Right ventricle myocardium inferior (tissue), 1 donor: ENCODE measurements at regions of chr7 and their contacts with region 1.

Region 1: DNA sequence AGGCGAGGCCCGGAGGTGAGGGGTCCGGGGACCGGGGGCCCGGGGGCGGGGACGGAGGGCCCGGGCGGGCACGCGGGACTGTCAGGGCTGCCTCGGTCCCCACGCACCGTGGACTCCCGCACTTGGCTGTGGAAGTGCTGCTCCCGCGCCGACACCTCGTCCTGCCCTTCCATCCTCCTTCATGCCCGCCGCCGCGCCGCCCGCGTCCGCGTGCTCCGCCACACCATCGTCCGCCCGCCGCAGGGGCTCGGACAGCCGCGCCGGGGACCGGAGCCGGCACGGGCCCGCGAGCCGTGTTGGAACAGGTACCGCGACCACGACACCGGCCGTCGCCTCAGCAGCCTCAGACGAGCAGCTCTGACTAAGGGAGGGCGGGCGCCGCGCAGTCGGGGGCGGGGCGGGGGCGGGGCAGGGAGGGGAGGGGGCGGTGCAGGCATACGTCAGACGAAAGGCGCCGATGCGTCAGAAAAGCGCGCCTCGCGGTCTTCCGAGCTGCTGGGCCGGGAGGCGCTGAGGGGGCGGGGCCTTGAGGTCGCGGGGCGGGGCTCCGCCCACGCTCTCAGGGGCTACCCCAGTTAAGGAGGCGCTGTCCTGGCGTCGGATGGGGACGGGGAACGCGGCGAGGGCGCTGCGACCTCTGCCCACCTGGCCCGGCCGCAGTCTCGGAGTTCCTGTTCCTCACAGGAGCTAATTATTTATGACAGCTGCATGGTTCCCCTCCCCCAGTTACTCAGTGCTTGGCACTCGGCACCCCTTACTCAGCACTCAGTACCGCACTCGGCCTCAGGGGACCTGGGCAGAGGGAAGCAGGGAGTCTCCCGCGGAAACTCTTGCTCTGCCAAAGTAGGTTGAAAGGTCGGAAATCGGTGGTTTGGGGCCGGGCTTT is at the start of gene LMBR1:
- DNase-seq: peak; percentile 97
- ATAC-seq: peak; percentile 98
- total RNA-seq, gene LMBR1: 35.4 TPM

Region 2: DNA sequence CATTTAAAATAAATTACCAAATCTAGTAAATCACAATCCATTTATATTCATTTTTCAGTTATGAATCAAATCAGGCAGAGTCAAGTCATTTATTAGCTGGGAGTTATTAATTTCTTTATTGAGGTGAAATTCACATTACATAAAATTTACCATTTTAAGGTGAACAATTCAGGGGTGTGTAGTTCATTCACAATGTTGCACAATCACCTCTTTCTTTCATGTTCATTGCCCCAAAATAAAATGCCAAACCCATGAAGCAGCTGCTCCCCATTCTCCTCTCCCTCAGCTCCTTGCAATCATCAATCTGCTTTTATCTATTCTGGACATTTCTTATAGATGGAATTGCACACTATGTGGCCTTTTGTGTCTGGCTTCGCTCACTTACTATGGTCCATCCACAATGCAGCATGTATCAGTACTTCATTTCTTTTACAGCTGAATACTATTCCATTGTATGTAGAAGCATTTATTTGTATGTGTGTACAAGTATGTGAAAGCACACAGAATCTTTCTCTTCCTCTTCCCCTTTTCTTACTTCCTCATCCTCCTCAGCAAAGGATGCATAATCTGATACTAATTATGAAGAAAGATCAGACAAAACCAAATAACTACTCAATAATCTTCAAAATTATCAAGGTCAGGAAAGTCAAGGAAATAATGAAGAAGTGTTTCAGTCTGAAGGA is 60.7 kb before region 1 on chr7:
- intact Hi-C with region 1: loop called (anchors 5 kb)
- DNase-seq: no peak
- ATAC-seq: no peak

Region 3: DNA sequence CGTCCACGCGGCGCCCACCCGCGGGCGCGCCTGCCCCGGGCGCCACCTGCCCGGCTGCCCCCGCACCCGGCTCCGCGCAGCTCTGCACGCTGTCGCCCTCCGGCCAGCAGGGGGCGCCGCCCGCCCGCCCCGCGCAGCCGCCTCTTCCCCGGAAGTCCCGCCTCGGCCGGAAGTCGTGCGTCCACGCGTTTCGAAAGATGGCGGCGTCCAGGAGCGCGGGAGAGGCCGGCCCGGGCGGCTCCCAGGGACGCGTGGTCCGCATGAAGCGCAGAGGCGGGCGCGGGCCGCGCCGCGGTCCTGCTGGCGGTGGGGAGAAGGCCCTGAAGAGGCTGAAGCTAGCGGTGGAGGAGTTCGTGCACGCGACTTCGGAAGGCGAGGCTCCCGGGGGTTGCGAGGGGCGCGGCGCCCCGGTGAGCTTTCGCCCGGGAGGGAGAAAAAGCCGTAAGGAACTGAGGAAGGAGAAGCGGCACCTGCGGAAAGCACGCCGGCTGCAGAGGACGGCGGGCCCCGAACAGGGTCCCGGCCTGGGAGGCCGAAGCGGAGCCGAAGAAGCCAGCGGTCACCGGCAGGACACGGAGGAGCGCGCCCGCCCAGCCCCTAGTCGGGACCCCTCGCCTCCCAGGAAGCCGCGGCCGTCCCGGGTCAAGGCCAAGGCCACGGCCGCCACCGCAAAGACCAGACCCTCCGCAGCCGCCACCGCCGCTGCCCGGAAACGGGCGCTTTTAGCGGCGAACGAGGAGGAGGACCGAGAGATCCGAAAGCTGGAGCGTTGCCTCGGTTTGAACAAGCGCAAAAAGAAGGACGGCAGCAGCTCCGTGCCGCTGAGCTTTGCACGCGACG is 56.7 kb after region 1 on chr7 and contains the start of gene NOM1:
- intact Hi-C with region 1: loop called (anchors 10 kb)
- DNase-seq: peak; percentile 96
- ATAC-seq: peak; percentile 98
- total RNA-seq, gene NOM1: 6.6 TPM